ENCODE measurements at regions of chr18 and their contacts with region 1.

Region 1: GRCh38 chr18:55477499-55477859 is 110.5 kb downstream of the TCF4 start:
- DNase-seq: peak; percentile 8
- H3K4me3 Mint-ChIP-seq: peak overlapping the region; percentile 87
- H3K27ac Mint-ChIP-seq: peak overlapping the region; percentile 83
- H3K4me1 Mint-ChIP-seq: peaks cover 13% of the 10 kb centered on the region
- H3K27me3 Mint-ChIP-seq: peaks cover 6% of the 10 kb centered on the region

Region 2: GRCh38 chr18:55422456-55423180 is 54.9 kb before region 1 on chr18:
- intact Hi-C with region 1: loop called (anchors 2 kb)
- DNase-seq: no peak
- H3K4me3 Mint-ChIP-seq: no peak overlapping the region
- H3K27ac Mint-ChIP-seq: no peak overlapping the region
- H3K4me1 Mint-ChIP-seq: no peaks in the 10 kb centered on the region
- H3K27me3 Mint-ChIP-seq: peaks cover 3% of the 10 kb centered on the region

Region 3: DNA sequence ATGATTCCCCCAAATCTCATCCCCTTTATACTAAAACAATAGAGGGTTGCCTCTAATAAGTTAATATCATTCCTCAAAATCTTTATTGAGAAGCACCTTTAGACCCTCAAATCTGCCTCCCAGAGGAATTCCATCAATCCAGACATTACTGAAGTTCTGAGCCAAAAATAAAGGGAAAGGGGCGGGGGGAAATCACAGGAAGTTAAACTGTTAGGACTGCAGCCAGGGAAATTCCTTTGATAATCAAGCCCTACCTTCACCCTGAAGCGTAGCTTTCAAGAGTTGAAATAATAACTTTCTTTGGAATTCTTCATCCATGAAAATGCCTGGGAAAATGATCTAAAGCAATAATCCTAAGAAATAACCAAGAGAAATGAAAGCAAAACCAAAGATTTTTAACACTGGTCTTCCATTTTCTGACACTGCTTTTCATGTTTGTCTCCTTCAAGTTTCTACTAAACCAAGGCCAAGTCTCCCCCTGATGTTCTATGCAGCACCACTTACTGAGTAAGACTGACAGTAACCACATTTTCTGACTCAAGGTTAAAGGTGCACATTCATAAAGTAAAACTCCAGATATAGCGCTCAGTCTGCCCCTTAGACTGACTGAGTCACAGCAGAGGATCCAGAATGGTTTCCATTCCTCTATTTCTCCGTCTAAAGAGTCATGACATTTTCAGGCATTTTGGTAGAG is 32.3 kb after region 1 on chr18:
- intact Hi-C with region 1: no loop called
- DNase-seq: no peak
- H3K4me3 Mint-ChIP-seq: no peak overlapping the region
- H3K27ac Mint-ChIP-seq: no peak overlapping the region
- H3K4me1 Mint-ChIP-seq: no peaks in the 10 kb centered on the region
- H3K27me3 Mint-ChIP-seq: no peaks in the 10 kb centered on the region

Region 4: GRCh38 chr18:55748227-55748738 is 270.8 kb after region 1 on chr18:
- intact Hi-C with region 1: no loop called
- DNase-seq: no peak
- H3K4me3 Mint-ChIP-seq: no peak overlapping the region
- H3K27ac Mint-ChIP-seq: no peak overlapping the region
- H3K4me1 Mint-ChIP-seq: no peaks in the 10 kb centered on the region
- H3K27me3 Mint-ChIP-seq: no peaks in the 10 kb centered on the region

Measured in activated T-helper 1 cell treated with anti-CD3 and anti-CD28 coated beads, Interleukin-12 subunit alpha, Interleukin-12 subunit beta, Interleukin-2, Interleukin-4 antibody, amounts not matched to agents 30 ng/mL and 10 ng/mL and 1 ng/mL, durations not matched to agents 14 hours and 24 hours and 36 hours (primary cell).